BJ (cell line): ENCODE measurements at regions of chr10 and their contacts with region 1.

Region 1: DNA sequence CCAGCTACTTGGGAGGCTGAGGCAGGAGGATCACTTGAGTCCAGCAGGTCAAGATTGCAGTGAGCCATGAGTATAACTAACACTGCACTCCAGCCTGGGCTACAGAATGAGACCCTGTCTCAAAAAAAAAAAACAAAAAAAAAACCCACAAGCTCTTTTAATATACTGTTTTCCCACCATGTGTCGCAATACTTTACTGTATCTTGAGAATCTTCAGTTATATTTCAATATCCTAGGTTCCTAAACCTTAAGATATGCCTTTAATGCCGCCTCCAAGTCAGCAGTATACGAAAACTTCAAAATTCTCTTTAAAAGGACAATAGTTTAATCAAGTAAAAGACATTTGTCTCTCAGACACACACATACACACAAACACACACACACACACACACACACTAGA is 62.8 kb downstream of the TAF3 start:
- DNase-seq: no peak
- H3K4me3 ChIP-seq: no peak overlapping the region
- H3K27me3 ChIP-seq: no peaks in the 10 kb centered on the region
- CTCF ChIP-seq: no peak

Region 2: DNA sequence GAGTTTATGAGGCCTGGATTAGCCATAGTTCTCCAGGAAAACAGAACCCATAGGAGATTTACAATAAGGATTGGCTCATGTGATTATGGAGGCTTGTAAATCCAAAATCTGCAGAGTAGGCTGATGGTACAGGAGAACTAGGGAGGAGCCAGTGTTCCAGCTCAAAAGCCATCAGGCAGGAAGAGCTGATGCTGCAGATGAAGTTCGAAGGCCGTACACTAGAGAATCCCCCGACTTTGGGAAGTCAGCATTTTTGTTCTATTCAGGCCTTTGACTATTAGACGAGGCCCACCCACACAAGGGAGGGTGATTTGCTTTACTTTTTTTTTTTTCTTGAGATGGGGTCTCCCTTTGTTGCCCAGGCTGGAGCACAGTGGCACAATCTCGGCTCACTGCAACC is 130.9 kb before region 1 on chr10:
- CTCF ChIA-PET with region 1: no interaction called
- POLR2A ChIA-PET with region 1: no interaction called
- DNase-seq: no peak
- H3K4me3 ChIP-seq: no peak overlapping the region
- H3K27me3 ChIP-seq: no peaks in the 10 kb centered on the region
- CTCF ChIP-seq: no peak

Region 3: DNA sequence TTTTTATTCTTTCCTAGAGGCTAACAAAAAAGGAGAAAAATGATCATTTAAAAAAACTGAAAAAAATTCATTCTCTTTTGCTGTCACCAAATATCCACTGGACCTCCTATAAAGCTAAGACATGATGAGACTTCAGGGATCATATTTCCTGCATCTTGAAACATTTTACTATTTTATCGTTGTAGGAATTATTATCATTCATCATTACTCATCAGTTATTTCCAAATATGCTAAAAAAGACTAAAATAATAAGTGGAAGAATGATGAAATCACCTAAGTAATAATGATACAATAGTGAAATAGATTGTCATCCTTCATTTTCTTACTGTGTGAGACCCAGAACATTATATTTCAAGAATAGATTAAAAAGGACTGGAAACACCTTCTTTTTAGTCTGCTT is 34.5 kb before region 1 on chr10:
- CTCF ChIA-PET with region 1: no interaction called
- POLR2A ChIA-PET with region 1: no interaction called
- DNase-seq: no peak
- H3K4me3 ChIP-seq: no peak overlapping the region
- H3K27me3 ChIP-seq: no peaks in the 10 kb centered on the region
- CTCF ChIP-seq: no peak

Region 4: DNA sequence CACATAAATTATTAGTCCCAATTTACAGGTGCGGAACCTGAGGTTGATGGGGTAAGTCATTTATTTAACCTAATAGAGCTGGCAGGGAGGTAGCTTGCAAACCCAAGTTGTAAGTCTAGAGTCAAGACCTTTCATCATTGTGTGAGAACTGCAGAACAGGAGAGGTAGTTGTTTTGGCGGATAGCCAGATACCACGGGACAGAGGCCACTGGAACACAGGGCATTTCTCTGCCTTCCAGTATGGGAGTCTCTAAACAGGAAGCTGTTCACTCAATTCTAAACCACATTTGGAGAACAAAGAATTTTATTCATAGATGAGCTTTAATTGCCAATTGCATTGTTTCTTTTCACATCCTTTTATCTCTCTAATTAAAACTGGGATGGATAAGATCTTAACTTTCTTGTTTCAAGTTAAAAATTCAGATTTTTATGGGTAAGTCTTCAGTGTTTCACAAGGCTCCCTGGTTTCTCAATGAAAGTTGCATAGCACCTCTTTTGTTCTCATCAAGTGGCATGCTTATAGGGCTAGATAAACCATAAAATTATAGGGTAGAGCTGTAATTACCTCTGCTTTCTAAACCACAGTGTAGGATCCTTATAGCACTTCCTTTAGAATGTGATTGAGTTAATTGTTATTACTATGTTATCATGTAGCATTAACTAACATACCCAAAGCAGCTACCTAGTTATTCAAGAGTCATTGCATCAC is 662.4 kb after region 1 on chr10:
- CTCF ChIA-PET with region 1: no interaction called
- POLR2A ChIA-PET with region 1: no interaction called
- DNase-seq: no peak
- H3K4me3 ChIP-seq: no peak overlapping the region
- H3K27me3 ChIP-seq: no peaks in the 10 kb centered on the region
- CTCF ChIP-seq: no peak

Region 5: GRCh38 chr10:9209105-9209798 is 1328.1 kb after region 1 on chr10:
- CTCF ChIA-PET with region 1: interaction called, 10 read pairs
- POLR2A ChIA-PET with region 1: no interaction called
- DNase-seq: no peak
- H3K4me3 ChIP-seq: no peak overlapping the region
- H3K27me3 ChIP-seq: no peaks in the 10 kb centered on the region
- CTCF ChIP-seq: peak; percentile 90